ENCODE measurements at regions of chr1 and their contacts with region 1.

Region 1: GRCh38 chr1:40612345-40612831 is 53.1 kb downstream of the RIMS3 start:
- DNase-seq: peak; percentile 68
- H3K4me3 ChIP-seq: peak overlapping the region in 1 of 3 experiments; percentile 16
- H3K27ac ChIP-seq: no peak overlapping the region
- H3K4me1 ChIP-seq: peaks cover 5% of the 10 kb centered on the region
- H3K27me3 ChIP-seq: no peaks in the 10 kb centered on the region
- CTCF ChIP-seq: peak; percentile 97 to 99

Region 2: DNA sequence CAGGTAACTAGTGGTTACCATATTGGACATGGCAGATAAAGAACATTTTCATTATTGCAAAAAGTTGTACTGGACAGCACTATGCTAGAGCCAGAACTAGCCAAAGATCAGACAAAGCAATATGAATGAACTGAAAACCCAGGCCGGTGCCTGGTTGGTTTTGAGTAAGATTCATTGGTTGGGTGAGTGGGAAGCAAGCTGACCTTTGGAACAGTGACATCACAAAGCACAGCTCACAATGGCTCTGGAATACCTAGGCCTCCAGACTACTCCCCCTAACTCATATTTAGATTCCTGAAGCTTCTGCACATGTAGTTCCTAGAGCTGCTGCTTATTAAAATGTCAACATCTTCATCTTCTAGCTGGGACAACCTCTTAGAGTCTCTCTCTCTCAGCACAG is 364.7 kb before region 1 on chr1 and contains the start of gene TMCO2:
- CTCF ChIA-PET with region 1: no interaction called
- dilution Hi-C with region 1: no loop called
- in situ Hi-C with region 1: no loop called
- intact Hi-C with region 1: no loop called
- DNase-seq: no peak
- H3K4me3 ChIP-seq: no peak within 1 kb of the TSS
- H3K27ac ChIP-seq: no peak within 1 kb of the TSS
- H3K4me1 ChIP-seq: peaks cover 5% of the 10 kb centered on the region
- H3K27me3 ChIP-seq: no peaks in the 10 kb centered on the region
- CTCF ChIP-seq: no peak
- total RNA-seq, gene TMCO2: not detected

Region 3: DNA sequence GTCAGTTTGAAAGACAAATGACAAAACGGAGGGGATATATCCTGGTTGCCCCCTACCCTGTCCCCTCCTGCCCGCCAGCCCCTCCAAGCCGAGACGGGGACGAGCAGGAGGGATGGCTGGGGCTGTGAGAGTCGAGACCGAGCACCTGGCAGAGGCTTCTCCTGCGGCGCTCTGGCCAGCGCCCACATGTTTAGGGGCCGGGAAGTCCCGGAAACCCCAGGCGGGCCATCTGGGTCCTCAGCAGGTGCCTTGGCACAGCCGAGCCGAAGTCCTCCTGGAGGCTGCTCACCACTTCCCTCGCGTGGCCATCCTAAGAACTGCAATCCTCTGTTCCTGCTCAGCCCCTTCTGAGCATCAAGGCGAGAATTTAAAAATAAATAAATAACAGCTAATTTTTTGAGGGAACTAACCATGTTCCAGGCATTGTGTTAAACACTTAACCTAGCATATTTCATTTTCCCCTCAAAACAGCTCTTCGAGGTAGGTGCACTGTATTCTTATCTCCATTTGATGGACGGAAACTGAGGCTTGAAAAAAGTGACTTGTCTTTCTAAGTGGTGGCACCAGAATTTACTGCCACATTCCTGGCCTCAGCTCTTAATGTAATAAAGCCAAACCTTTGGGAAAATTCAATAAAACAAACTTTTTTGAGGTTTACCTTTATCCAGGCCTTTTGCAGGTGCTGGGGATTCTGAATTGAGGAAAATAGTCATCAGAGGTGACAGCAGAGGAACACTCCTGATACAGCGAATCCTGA is 56.6 kb after region 1 on chr1:
- CTCF ChIA-PET with region 1: no interaction called
- dilution Hi-C with region 1: no loop called
- in situ Hi-C with region 1: no loop called
- intact Hi-C with region 1: loop called (anchors 1 kb)
- DNase-seq: peak; percentile 57
- H3K4me3 ChIP-seq: no peak overlapping the region
- H3K27ac ChIP-seq: no peak overlapping the region
- H3K4me1 ChIP-seq: peaks cover 7% of the 10 kb centered on the region
- H3K27me3 ChIP-seq: no peaks in the 10 kb centered on the region
- CTCF ChIP-seq: peak; percentile 94 to 95

Region 4: GRCh38 chr1:40774266-40774998 is 162.0 kb after region 1 on chr1:
- CTCF ChIA-PET with region 1: no interaction called
- dilution Hi-C with region 1: no loop called
- in situ Hi-C with region 1: no loop called
- intact Hi-C with region 1: loop called (anchors 2 kb)
- DNase-seq: no peak
- H3K4me3 ChIP-seq: no peak overlapping the region
- H3K27ac ChIP-seq: no peak overlapping the region
- H3K4me1 ChIP-seq: peaks cover 13% of the 10 kb centered on the region
- H3K27me3 ChIP-seq: no peaks in the 10 kb centered on the region
- CTCF ChIP-seq: peak; percentile 83 to 84

Region 5: DNA sequence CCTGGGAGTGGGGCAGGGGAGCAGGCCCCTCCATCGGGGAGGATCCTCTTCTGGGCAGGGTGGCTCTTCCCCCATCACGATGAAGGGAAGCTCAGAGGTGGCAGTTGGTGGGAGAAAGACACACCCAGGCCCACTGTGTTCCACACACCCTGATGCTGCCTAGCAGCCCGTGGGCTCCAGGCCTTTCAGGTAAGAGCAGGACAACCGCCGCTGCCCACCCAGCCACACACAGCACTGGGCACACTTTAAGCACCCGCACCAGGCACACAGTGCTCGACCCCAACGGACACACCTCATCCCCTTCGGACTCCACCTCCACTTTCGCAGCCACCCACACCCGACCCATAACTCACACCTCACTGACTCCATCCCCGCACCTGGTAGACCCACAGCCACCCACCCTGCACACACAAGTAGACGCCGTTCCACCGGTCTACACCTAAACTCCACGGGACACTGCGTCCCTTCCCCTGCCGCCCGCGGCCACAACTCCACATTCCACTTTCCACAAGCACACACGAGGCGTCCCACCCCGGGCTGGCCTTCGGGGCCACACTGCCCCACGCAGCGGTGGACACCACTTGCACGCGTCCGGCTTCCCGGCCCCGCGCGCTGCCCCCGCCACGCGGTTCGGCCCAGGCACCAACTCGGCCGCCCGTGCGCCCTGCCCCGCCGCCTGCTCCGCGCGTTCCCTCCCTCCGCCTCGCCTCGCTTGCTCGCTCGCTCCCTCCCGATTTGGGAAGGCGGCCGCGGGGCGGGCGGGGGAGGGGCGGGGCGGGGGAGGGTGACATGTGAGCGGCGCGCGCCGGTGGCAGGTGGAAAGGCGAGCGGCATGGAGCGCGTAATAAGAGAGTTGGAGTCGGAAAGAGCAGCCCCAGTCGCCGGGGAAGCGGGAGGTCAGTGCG is 170.9 kb after region 1 on chr1 and contains the start of gene KCNQ4:
- CTCF ChIA-PET with region 1: no interaction called
- dilution Hi-C with region 1: no loop called
- in situ Hi-C with region 1: loop called in 1 of 2 experiments (anchors 10 kb)
- intact Hi-C with region 1: no loop called
- DNase-seq: no peak
- H3K4me3 ChIP-seq: peak within 1 kb of the TSS in 2 of 3 experiments; percentile 24 to 33
- H3K27ac ChIP-seq: no peak within 1 kb of the TSS
- H3K4me1 ChIP-seq: peaks cover 5% of the 10 kb centered on the region
- H3K27me3 ChIP-seq: peaks cover 8% of the 10 kb centered on the region
- CTCF ChIP-seq: no peak
- total RNA-seq, gene KCNQ4: not detected

Region 6: GRCh38 chr1:40840526-40841323 is 228.3 kb after region 1 on chr1:
- CTCF ChIA-PET with region 1: no interaction called
- dilution Hi-C with region 1: no loop called
- in situ Hi-C with region 1: loop called (anchors 5 to 10 kb)
- intact Hi-C with region 1: no loop called
- DNase-seq: no peak
- H3K4me3 ChIP-seq: no peak overlapping the region
- H3K27ac ChIP-seq: no peak overlapping the region
- H3K4me1 ChIP-seq: no peaks in the 10 kb centered on the region
- H3K27me3 ChIP-seq: no peaks in the 10 kb centered on the region
- CTCF ChIP-seq: no peak

Region 7: DNA sequence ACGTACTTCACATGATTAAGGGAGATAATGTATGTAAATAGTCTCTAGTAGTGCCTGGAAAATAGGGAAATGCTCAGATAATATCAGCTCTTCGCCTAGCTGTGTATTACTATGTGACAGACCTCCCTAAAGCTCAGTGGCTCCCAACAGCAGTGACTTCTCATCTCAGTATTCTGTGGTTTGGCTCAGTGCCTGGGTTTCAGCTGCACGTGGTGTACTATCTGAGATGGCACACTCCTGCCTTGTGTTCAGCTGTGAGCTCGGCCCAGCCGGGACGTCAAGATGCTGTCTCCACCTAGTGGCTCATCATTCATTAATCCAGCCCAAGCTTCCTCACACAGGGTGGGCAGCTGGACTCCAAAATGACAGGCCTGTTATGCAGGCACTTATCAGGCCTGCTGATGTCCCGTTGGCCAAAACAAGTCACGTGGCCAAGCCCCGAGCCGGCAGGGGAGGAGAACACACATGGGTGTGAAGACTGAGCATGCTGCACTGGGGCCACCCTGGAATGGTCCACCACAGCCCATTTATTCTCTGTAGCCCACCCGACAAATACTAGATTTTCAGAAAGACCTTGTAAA is 391.3 kb after region 1 on chr1:
- CTCF ChIA-PET with region 1: no interaction called
- dilution Hi-C with region 1: no loop called
- in situ Hi-C with region 1: no loop called
- intact Hi-C with region 1: loop called (anchors 1 kb)
- DNase-seq: peak; percentile 97
- H3K4me3 ChIP-seq: no peak overlapping the region
- H3K27ac ChIP-seq: peak overlapping the region; percentile 38
- H3K4me1 ChIP-seq: peaks cover 49% of the 10 kb centered on the region
- H3K27me3 ChIP-seq: no peaks in the 10 kb centered on the region
- CTCF ChIP-seq: peak; percentile 57 to 74